HepG2 (cell line): ENCODE measurements at regions of chr3 and their contacts with region 1.

Region 1: DNA sequence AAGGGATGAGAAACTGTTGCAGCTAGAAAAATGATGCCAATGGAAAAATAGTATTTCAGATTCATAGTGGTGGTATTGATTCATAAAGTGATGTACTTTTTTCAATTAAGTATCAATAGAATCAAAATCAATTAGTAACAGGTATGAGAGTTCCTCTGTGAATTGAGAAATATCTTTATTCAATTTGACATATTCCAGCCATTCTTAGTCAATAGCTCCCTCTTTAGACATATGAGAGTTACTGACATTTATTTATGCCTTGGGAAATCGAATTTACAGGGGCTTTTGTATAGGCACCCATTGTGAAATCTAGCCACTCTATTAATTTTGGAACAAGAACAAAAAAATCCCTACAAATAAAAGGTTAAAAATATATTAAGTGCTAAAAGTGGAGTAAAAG is 386.9 kb upstream of the CNTN3 start:
- DNase-seq: peak; percentile 1
- ATAC-seq: no peak
- H3K4me3 ChIP-seq: no peak overlapping the region
- H3K27ac ChIP-seq: no peak overlapping the region
- H3K4me1 ChIP-seq: no peaks in the 10 kb centered on the region
- H3K27me3 ChIP-seq: no peaks in the 10 kb centered on the region
- CTCF ChIP-seq: 0 out of 2 replicates have a peak, but pooled peaks have one; percentile 24
- EP300 ChIP-seq: no peak
- POLR2A ChIP-seq: no peak
- RAD21 ChIP-seq: no peak

Region 2: GRCh38 chr3:73868688-73869315 is 1132.5 kb before region 1 on chr3:
- CTCF ChIA-PET with region 1: no interaction called
- POLR2A ChIA-PET with region 1: no interaction called
- in situ Hi-C with region 1: no loop called
- intact Hi-C with region 1: loop called (anchors 10 kb)
- DNase-seq: peak; percentile 12
- ATAC-seq: peak; percentile 70
- H3K4me3 ChIP-seq: no peak overlapping the region
- H3K27ac ChIP-seq: no peak overlapping the region
- H3K4me1 ChIP-seq: no peaks in the 10 kb centered on the region
- H3K27me3 ChIP-seq: no peaks in the 10 kb centered on the region
- CTCF ChIP-seq: peak; percentile 55
- EP300 ChIP-seq: no peak
- POLR2A ChIP-seq: no peak
- RAD21 ChIP-seq: no peak

Region 3: GRCh38 chr3:74465715-74466410 is 535.5 kb before region 1 on chr3:
- CTCF ChIA-PET with region 1: no interaction called
- POLR2A ChIA-PET with region 1: no interaction called
- in situ Hi-C with region 1: no loop called
- intact Hi-C with region 1: no loop called
- DNase-seq: no peak
- ATAC-seq: no peak
- H3K4me3 ChIP-seq: no peak overlapping the region
- H3K27ac ChIP-seq: no peak overlapping the region
- H3K4me1 ChIP-seq: no peaks in the 10 kb centered on the region
- H3K27me3 ChIP-seq: no peaks in the 10 kb centered on the region; a peak in 1 of 5 replicates
- CTCF ChIP-seq: no peak
- EP300 ChIP-seq: no peak
- POLR2A ChIP-seq: no peak
- RAD21 ChIP-seq: no peak